ENCODE measurements at regions of chr12 and their contacts with region 1.

Region 1: DNA sequence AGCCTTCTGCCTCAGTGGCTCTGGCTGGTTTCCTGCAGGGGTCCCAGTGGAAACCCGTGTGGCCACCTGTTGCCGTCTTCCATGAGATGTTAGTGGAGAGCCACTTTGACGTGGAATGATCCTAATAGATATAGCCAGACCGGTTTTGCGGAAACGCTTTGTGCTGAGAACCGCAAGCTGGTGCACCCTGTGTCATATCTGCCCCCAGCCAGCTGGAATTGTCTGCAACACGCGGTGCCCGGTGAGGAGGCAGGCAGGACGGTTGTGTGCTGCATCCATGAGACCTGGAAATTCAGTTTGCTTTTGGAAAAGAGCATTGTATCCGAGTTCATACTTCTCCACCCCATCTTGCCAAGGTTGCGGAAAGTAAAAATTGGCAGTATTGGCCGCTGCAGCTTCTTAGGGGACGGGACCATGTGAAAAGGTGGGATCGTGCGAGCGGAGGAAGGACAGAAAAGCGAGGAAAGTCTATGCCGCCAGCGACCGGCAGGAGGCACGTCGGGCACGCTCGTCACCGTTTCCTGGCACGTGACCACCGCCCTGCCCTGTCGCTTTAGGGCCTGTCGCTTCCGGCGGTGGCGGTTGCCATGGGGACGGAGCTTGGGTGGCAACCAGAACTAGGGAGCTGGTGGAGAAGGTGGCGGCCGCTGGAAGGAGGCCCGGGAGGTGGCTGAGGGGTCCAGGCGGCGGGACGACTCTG is at the start of gene CFAP251:
- DNase-seq: peak in 1 of 2 experiments; percentile 77
- H3K4me3 ChIP-seq: no peak within 1 kb of the TSS
- H3K27ac ChIP-seq: no peak within 1 kb of the TSS
- H3K4me1 ChIP-seq: no peaks in the 10 kb centered on the region
- H3K27me3 ChIP-seq: no peaks in the 10 kb centered on the region
- CTCF ChIP-seq: no peak
- total RNA-seq, gene CFAP251: 3.7 and 4.3 TPM in 2 replicates

Region 2: GRCh38 chr12:121668750-121669520 is 249.2 kb before region 1 on chr12:
- CTCF ChIA-PET with region 1: no interaction called
- POLR2A ChIA-PET with region 1: interaction called, 10 read pairs
- intact Hi-C with region 1: no loop called
- DNase-seq: peak in 1 of 2 experiments; percentile 18
- H3K4me3 ChIP-seq: no peak overlapping the region
- H3K27ac ChIP-seq: no peak overlapping the region
- H3K4me1 ChIP-seq: peaks cover 42% of the 10 kb centered on the region
- H3K27me3 ChIP-seq: no peaks in the 10 kb centered on the region
- CTCF ChIP-seq: peak; percentile 62; the same call in 1 of the 2 replicates

Region 3: GRCh38 chr12:121955258-121956235 is 37.4 kb after region 1 on chr12:
- CTCF ChIA-PET with region 1: no interaction called
- POLR2A ChIA-PET with region 1: interaction called, 14 read pairs
- intact Hi-C with region 1: no loop called
- DNase-seq: no peak
- H3K4me3 ChIP-seq: no peak overlapping the region
- H3K27ac ChIP-seq: no peak overlapping the region
- H3K4me1 ChIP-seq: no peaks in the 10 kb centered on the region
- H3K27me3 ChIP-seq: no peaks in the 10 kb centered on the region
- CTCF ChIP-seq: peak; percentile 65

Measured in PC-9 (cell line).